Naive thymus-derived CD4-positive, alpha-beta T cell (primary cell): ENCODE measurements at regions of chr12 and their contacts with region 1.

Region 1: GRCh38 chr12:102043928-102044327 is 17.9 kb downstream of the WASHC3 start:
- DNase-seq: peak in 8 of 9 donors; percentile 26 to 62 (median 42)
- ATAC-seq: peak; percentile 83
- H3K4me3 ChIP-seq: no peak overlapping the region
- H3K4me3 Mint-ChIP-seq: peak overlapping the region in 9 of 10 donors; percentile 22 to 79 (median 48)
- H3K27ac ChIP-seq: peak overlapping the region; percentile 42
- H3K27ac Mint-ChIP-seq: peak overlapping the region; percentile 16 to 85 (median 50)
- H3K4me1 ChIP-seq: peaks cover 0 to 12% of the 10 kb centered on the region in 2 donors
- H3K4me1 Mint-ChIP-seq: peaks cover 3 to 20% (median 16%) of the 10 kb centered on the region in 7 donors
- H3K27me3 ChIP-seq: no peaks in the 10 kb centered on the region
- H3K27me3 Mint-ChIP-seq: no peaks in the 10 kb centered on the region

Region 2: GRCh38 chr12:102029141-102029540 is 14.8 kb before region 1 on chr12:
- CTCF ChIA-PET with region 1: interaction called, 4 read pairs
- POLR2A ChIA-PET with region 1: no interaction called
- intact Hi-C with region 1: loop called in 1 of 2 experiments (anchors 2 kb)
- DNase-seq: no peak
- ATAC-seq: no peak
- H3K4me3 ChIP-seq: no peak overlapping the region
- H3K4me3 Mint-ChIP-seq: no peak overlapping the region
- H3K27ac ChIP-seq: no peak overlapping the region
- H3K27ac Mint-ChIP-seq: no peak overlapping the region
- H3K4me1 ChIP-seq: no peaks in the 10 kb centered on the region
- H3K4me1 Mint-ChIP-seq: peaks cover 0 to 5% (median 0%) of the 10 kb centered on the region in 7 donors
- H3K27me3 ChIP-seq: no peaks in the 10 kb centered on the region
- H3K27me3 Mint-ChIP-seq: no peaks in the 10 kb centered on the region